HEK293T (cell line): ENCODE measurements at regions of chr12 and their contacts with region 1.

Region 1: DNA sequence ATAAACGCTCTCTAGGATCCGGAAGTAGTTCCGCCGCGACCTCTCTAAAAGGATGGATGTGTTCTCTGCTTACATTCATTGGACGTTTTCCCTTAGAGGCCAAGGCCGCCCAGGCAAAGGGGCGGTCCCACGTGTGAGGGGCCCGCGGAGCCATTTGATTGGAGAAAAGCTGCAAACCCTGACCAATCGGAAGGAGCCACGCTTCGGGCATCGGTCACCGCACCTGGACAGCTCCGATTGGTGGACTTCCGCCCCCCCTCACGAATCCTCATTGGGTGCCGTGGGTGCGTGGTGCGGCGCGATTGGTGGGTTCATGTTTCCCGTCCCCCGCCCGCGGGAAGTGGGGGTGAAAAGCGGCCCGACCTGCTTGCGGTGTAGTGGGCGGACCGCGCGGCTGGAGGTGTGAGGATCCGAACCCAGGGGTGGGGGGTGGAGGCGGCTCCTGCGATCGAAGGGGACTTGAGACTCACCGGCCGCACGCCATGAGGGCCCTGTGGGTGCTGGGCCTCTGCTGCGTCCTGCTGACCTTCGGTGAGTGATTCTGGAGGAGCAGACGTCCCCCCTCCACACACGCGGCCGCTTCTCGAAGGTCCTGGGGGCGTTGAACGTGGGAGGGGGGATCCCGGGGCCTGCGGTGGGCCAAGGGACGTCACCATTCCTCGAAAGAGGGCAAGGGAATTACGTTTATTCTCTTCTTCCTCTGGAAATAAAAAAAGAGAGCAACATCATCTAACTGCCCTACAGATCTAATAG is at the start of gene HSP90B1:
- DNase-seq: peak; percentile 97

Region 2: DNA sequence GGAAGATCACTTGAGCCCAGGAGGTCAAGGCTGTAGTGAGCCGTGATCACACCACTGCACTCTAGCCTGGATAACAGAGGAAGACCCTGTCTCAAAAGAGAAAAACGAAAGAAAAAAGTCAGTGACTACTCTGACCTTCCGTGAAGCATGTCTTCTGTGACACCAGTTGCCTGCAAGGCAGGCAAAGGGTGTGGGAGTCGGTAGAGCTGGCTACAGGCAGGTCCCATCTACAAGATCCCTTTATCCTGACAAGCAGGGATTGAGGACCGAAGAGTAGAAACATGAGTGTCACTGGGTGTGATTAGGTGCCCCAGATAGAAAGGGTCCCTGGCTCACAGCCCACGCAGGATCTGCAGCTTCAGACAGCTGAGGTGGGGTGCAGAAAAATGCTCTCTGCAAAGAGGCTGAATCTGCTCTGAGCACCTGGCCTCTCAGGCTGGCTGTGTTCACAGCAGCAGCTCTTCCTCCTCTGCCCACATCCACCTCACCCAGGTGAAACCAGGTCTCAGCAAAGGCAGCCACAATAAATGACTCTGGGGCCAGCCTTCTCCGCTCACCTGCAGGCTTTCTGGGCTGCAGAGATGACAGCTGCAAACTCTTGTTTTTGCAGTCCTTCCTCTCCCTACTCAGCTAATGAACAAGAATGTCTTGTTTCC is 28.6 kb before region 1 on chr12:
- CTCF ChIA-PET with region 1: no interaction called
- POLR2A ChIA-PET with region 1: interaction called, 10 read pairs
- DNase-seq: no peak

Region 3: GRCh38 chr12:103956516-103957027 is 26.4 kb after region 1 on chr12:
- CTCF ChIA-PET with region 1: no interaction called
- POLR2A ChIA-PET with region 1: interaction called, 26 read pairs
- DNase-seq: no peak